ENCODE measurements at regions of chr16 and their contacts with region 1.

Region 1: GRCh38 chr16:82263521-82264143 is 93.6 kb upstream of the MPHOSPH6 start:
- DNase-seq: peak; percentile 69
- H3K4me3 ChIP-seq: no peak overlapping the region
- H3K27ac ChIP-seq: peak overlapping the region in 1 of 2 donors; percentile 16
- H3K4me1 ChIP-seq: no peaks in the 10 kb centered on the region
- H3K27me3 ChIP-seq: no peaks in the 10 kb centered on the region
- CTCF ChIP-seq: peak; percentile 81 to 95 (median 89)
- POLR2A ChIP-seq: peak; percentile 10

Region 2: GRCh38 chr16:82639666-82640336 is 376.2 kb after region 1 on chr16:
- intact Hi-C with region 1: loop called (anchors 10 kb)
- DNase-seq: no peak
- H3K4me3 ChIP-seq: no peak overlapping the region
- H3K27ac ChIP-seq: no peak overlapping the region
- H3K4me1 ChIP-seq: no peaks in the 10 kb centered on the region
- H3K27me3 ChIP-seq: no peaks in the 10 kb centered on the region
- CTCF ChIP-seq: peak in 2 of 4 experiments; percentile 24 to 68
- POLR2A ChIP-seq: no peak

Region 3: GRCh38 chr16:83878838-83879237 is 1615.2 kb after region 1 on chr16:
- intact Hi-C with region 1: loop called (anchors 5 kb)
- DNase-seq: peak; percentile 16
- H3K4me3 ChIP-seq: no peak overlapping the region
- H3K27ac ChIP-seq: no peak overlapping the region
- H3K4me1 ChIP-seq: no peaks in the 10 kb centered on the region
- H3K27me3 ChIP-seq: no peaks in the 10 kb centered on the region
- CTCF ChIP-seq: peak in 3 of 4 experiments; percentile 48 to 61 (median 50)
- POLR2A ChIP-seq: no peak

Measured in prostate gland (tissue), 2 donors.